PC-9 (cell line): ENCODE measurements at regions of chr12 and their contacts with region 1.

Region 1: GRCh38 chr12:15682826-15683225 is 106.4 kb downstream of the EPS8 start:
- DNase-seq: peak in 1 of 2 experiments; percentile 63
- H3K4me3 ChIP-seq: no peak overlapping the region
- H3K27ac ChIP-seq: peak overlapping the region; percentile 31; the same call in 1 of the 2 replicates
- H3K4me1 ChIP-seq: peaks cover 22% of the 10 kb centered on the region
- H3K27me3 ChIP-seq: no peaks in the 10 kb centered on the region
- CTCF ChIP-seq: no peak

Region 2: DNA sequence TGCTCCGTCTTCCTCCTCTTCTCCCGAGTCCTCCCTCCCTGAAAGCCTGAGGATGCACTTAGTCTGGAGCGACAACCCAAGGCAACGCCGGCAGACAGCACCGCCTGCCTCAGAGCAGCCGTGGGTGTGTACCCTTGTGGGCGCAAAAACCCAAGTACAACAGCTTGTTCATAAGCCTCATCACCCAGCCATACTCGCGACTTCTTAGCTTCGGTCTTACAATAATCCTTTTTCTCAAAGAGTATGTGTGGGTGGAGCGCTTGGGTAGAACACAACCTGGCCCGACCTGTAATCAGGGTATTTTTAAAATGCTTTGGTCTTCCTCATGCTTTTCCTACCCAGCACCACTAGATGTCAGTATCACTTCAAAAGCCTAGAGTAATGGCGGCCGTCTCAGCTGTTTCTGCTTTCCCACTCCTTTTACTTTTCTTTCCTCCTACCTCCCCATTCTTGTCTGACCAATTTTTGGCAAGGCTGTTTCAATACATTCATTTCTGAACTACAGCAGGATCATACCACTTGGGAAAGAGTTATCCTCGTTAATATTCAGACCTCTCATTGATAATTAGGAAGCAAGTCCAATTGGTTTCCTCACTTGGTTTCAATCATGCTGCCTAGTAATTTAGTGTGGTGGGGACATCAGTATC is 92.5 kb before region 1 on chr12:
- CTCF ChIA-PET with region 1: no interaction called
- POLR2A ChIA-PET with region 1: no interaction called
- intact Hi-C with region 1: no loop called
- DNase-seq: peak; percentile 55 to 64
- H3K4me3 ChIP-seq: peak overlapping the region; percentile 35; the same call in 1 of the 2 replicates
- H3K27ac ChIP-seq: no peak overlapping the region
- H3K4me1 ChIP-seq: peaks cover 8% of the 10 kb centered on the region; the same call in 1 of the 2 replicates
- H3K27me3 ChIP-seq: no peaks in the 10 kb centered on the region
- CTCF ChIP-seq: peak; percentile 92

Region 3: GRCh38 chr12:15669256-15669948 is 13.4 kb before region 1 on chr12:
- CTCF ChIA-PET with region 1: no interaction called
- POLR2A ChIA-PET with region 1: interaction called, 24 read pairs
- intact Hi-C with region 1: no loop called
- DNase-seq: no peak
- H3K4me3 ChIP-seq: no peak overlapping the region
- H3K27ac ChIP-seq: no peak overlapping the region
- H3K4me1 ChIP-seq: no peaks in the 10 kb centered on the region
- H3K27me3 ChIP-seq: no peaks in the 10 kb centered on the region
- CTCF ChIP-seq: no peak

Region 4: GRCh38 chr12:15782667-15783066 is 99.8 kb after region 1 on chr12:
- CTCF ChIA-PET with region 1: no interaction called
- POLR2A ChIA-PET with region 1: no interaction called
- intact Hi-C with region 1: no loop called
- DNase-seq: no peak
- H3K4me3 ChIP-seq: no peak overlapping the region
- H3K27ac ChIP-seq: no peak overlapping the region
- H3K4me1 ChIP-seq: peaks cover 39% of the 10 kb centered on the region
- H3K27me3 ChIP-seq: no peaks in the 10 kb centered on the region
- CTCF ChIP-seq: no peak